ENCODE measurements at regions of chr22 and their contacts with region 1.

Region 1: GRCh38 chr22:41656556-41656955 is 32.1 kb downstream of the SNU13 start:
- DNase-seq: no peak
- H3K4me3 ChIP-seq: no peak overlapping the region
- H3K27ac ChIP-seq: no peak overlapping the region
- H3K4me1 ChIP-seq: no peaks in the 10 kb centered on the region
- H3K27me3 ChIP-seq: no peaks in the 10 kb centered on the region
- CTCF ChIP-seq: no peak
- EP300 ChIP-seq: no peak
- POLR2A ChIP-seq: no peak
- RAD21 ChIP-seq: no peak

Region 2: DNA sequence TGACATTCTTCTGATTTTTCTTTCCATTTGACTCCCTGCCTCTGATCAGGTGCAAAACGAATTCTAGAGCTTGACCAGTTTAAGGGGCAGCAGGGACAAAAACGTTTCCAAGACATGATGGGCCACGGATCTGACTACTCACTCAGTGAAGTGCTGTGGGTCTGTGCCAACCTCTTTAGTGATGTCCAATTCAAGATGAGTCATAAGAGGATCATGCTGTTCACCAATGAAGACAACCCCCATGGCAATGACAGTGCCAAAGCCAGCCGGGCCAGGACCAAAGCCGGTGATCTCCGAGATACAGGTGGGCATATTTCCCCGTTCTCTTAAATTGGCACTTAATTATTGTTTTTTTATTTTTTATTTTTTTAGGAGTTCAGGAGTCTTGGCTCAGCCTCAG is 20.1 kb before region 1 on chr22:
- CTCF ChIA-PET with region 1: interaction called, 3 read pairs
- POLR2A ChIA-PET with region 1: interaction called, 129 read pairs
- DNase-seq: no peak
- H3K4me3 ChIP-seq: no peak overlapping the region
- H3K27ac ChIP-seq: no peak overlapping the region
- H3K4me1 ChIP-seq: no peaks in the 10 kb centered on the region
- H3K27me3 ChIP-seq: no peaks in the 10 kb centered on the region
- CTCF ChIP-seq: no peak
- EP300 ChIP-seq: no peak
- POLR2A ChIP-seq: no peak
- RAD21 ChIP-seq: no peak

Region 3: DNA sequence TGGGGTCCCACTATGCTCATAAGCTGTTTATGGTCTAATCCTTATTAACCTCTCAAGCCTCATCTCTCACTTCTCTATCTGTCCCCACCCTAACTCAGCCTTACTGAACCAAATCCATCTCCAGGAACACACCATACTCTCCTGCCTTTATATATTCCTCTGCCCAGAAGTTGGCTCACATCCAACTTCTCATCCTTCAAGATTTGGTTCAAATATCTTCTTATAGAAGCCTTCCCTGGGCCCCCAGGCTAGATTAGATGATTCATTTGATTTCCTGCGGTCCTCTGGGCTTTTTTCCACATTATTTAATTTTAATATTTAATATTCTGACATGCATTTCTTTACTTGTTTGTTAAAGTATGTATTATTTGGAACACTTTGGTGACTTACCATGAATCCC is 65.9 kb after region 1 on chr22:
- CTCF ChIA-PET with region 1: no interaction called
- POLR2A ChIA-PET with region 1: no interaction called
- DNase-seq: no peak
- H3K4me3 ChIP-seq: no peak overlapping the region
- H3K27ac ChIP-seq: no peak overlapping the region
- H3K4me1 ChIP-seq: no peaks in the 10 kb centered on the region
- H3K27me3 ChIP-seq: no peaks in the 10 kb centered on the region
- CTCF ChIP-seq: no peak
- EP300 ChIP-seq: no peak
- POLR2A ChIP-seq: no peak
- RAD21 ChIP-seq: no peak

Measured in H1 (cell line).